ENCODE measurements at regions of chr1 and their contacts with region 1.

Region 1: GRCh38 chr1:94854458-94855306 is 34.5 kb downstream of the SLC44A3 start:
- ATAC-seq: peak; percentile 90 to 99 (median 94)
- H3K4me3 ChIP-seq: peak overlapping the region in 1 of 5 donors; percentile 8
- H3K27ac ChIP-seq: no peak overlapping the region
- H3K4me1 ChIP-seq: peaks cover 3 to 14% of the 10 kb centered on the region in 2 donors

Region 2: GRCh38 chr1:94971491-94971924 is 116.8 kb after region 1 on chr1:
- in situ Hi-C with region 1: no loop called
- ATAC-seq: no peak
- H3K4me3 ChIP-seq: no peak overlapping the region
- H3K27ac ChIP-seq: no peak overlapping the region
- H3K4me1 ChIP-seq: peaks cover 0 to 13% of the 10 kb centered on the region in 2 donors

Region 3: GRCh38 chr1:95035536-95035935 is 180.9 kb after region 1 on chr1:
- in situ Hi-C with region 1: loop called in 7 of 9 experiments (anchors 10 to 25 kb)
- ATAC-seq: no peak
- H3K4me3 ChIP-seq: no peak overlapping the region
- H3K27ac ChIP-seq: no peak overlapping the region
- H3K4me1 ChIP-seq: no peaks in the 10 kb centered on the region

Measured in motor neuron (in vitro differentiated cells).